ENCODE measurements at regions of chr1 and their contacts with region 1.

Region 1: GRCh38 chr1:212558693-212559480 is 49.7 kb upstream of the ATF3 start:
- DNase-seq: peak; percentile 95 to 96
- ATAC-seq: peak; percentile 95
- H3K4me3 ChIP-seq: peak overlapping the region; percentile 4 to 43
- H3K27ac ChIP-seq: peak overlapping the region in 1 of 2 donors; percentile 100
- H3K4me1 ChIP-seq: no peaks in the 10 kb centered on the region
- H3K27me3 ChIP-seq: no peaks in the 10 kb centered on the region

Region 2: DNA sequence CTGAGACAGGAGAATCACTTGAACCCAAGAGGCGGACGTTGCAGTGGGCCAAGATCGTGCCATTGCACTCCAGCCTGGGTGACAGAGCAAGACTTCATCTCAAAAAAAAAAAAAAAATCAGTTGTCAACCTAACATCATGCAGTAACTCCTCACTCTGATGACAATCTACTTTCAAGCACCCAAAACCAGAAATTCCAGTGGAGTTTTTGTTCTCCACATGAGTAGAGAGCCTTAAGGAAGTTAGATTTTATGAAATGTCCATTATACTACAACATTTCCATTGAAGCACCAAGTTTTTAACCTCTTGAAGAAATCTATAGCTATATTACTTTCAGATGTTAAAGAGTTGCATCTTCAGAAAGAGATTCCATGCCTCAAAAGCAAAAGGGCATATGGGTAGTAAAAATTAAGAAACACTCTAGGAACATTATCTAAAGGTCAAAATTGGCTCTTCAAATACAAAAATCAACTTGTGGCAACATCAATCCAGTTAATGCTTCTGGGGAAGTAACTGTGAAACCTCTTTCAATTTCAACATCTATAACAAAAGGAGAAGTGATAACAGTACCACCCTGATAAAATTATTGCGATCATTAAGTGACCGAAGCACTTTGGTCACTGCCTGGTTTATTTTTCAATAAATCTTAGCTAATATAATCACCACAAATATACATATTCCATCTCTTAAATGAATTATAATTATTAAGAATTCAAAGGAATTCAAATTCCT is 736.0 kb before region 1 on chr1:
- intact Hi-C with region 1: no loop called
- DNase-seq: no peak
- ATAC-seq: no peak
- H3K4me3 ChIP-seq: no peak overlapping the region
- H3K27ac ChIP-seq: no peak overlapping the region
- H3K4me1 ChIP-seq: peaks cover 2% of the 10 kb centered on the region in 2 donors
- H3K27me3 ChIP-seq: no peaks in the 10 kb centered on the region

Region 3: GRCh38 chr1:212482384-212483281 is 76.3 kb before region 1 on chr1:
- intact Hi-C with region 1: loop called (anchors 5 kb)
- DNase-seq: peak in 1 of 2 donors; percentile 73
- ATAC-seq: no peak
- H3K4me3 ChIP-seq: no peak overlapping the region
- H3K27ac ChIP-seq: peak overlapping the region in 1 of 2 donors; percentile 35
- H3K4me1 ChIP-seq: peaks cover 0 to 3% of the 10 kb centered on the region in 2 donors
- H3K27me3 ChIP-seq: no peaks in the 10 kb centered on the region

Region 4: GRCh38 chr1:212488397-212489283 is 70.2 kb before region 1 on chr1:
- intact Hi-C with region 1: loop called (anchors 5 kb)
- DNase-seq: peak in 1 of 2 donors; percentile 78
- ATAC-seq: peak; percentile 77
- H3K4me3 ChIP-seq: no peak overlapping the region
- H3K27ac ChIP-seq: peak overlapping the region in 1 of 2 donors; percentile 70
- H3K4me1 ChIP-seq: no peaks in the 10 kb centered on the region
- H3K27me3 ChIP-seq: no peaks in the 10 kb centered on the region

Region 5: DNA sequence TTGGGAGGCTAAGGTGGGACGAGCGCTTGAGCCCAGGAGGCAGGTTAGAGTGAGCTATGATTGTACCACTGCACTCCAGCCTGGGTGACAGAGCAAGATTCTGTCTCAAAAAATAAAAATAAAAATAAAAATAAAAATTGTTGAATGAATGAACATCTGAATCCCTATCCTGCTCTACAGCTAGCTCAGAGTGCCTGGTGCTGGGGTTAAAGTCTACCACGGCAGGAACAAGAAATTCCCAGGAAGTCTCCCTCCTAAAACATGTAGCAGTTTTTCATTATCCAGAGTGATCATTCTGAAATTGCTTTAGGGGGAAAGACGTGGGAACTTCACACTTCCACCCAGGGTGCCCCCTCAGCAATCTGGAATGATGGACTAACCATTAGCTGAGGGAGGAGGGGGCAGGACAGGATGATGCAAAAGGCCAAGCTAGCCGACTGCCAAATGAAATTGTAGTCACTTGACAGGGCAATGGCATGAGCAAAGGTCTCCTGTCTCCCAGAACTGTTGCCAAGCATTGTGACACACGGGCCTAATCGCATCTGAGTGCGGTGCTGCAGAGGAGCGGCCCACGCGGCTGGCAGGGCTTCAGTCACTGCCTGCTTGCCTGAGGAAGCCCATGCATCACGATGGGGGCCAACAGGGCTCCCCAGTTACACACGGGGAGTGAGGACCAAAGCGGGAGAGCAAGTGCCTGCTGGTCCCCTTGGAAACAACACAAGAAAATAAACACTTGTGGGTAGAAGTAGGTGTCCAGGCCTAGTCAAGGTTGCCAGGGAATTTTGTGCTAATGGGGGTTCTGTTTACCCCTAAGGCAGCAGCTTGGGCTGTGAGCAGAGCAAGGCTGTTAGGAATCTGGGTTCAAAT is 40.5 kb before region 1 on chr1:
- intact Hi-C with region 1: loop called in 1 of 2 experiments (anchors 5 kb)
- DNase-seq: peak in 1 of 2 donors; percentile 84
- ATAC-seq: no peak
- H3K4me3 ChIP-seq: no peak overlapping the region
- H3K27ac ChIP-seq: no peak overlapping the region
- H3K4me1 ChIP-seq: no peaks in the 10 kb centered on the region
- H3K27me3 ChIP-seq: no peaks in the 10 kb centered on the region

Region 6: DNA sequence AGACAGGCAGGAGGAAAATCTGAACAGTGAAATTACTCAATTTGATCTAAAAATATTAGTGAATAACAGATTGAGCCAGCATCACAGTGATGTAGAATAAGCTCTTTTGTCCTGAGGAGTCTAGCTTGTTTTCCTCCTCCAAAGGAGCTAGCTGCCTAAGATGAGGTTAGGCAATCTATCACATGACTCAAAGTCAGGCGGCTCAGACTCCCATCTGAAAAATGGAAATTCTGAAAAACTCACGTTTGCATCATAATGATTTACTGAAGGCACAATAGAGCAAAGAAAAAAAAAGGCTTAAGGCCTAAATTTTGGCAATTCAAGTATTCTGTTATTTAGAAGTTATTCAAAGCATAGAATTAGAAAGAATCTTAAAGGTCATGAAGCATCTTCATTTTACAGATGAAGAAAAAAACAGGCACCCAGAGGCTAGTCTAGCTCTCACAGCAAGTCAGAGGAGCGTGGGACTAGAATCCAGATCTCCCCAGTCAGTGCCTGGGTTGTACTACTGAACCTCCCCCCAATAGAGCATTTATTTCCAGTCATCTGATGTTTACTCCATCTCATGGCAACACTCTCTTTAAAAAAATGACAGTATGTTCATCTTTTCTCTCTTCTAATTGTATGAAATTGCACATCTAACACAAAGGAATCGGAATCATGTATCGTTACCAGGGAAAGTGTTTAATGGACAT is 12.8 kb before region 1 on chr1:
- intact Hi-C with region 1: no loop called
- DNase-seq: no peak
- ATAC-seq: peak; percentile 48
- H3K4me3 ChIP-seq: no peak overlapping the region
- H3K27ac ChIP-seq: no peak overlapping the region
- H3K4me1 ChIP-seq: no peaks in the 10 kb centered on the region
- H3K27me3 ChIP-seq: no peaks in the 10 kb centered on the region

Region 7: DNA sequence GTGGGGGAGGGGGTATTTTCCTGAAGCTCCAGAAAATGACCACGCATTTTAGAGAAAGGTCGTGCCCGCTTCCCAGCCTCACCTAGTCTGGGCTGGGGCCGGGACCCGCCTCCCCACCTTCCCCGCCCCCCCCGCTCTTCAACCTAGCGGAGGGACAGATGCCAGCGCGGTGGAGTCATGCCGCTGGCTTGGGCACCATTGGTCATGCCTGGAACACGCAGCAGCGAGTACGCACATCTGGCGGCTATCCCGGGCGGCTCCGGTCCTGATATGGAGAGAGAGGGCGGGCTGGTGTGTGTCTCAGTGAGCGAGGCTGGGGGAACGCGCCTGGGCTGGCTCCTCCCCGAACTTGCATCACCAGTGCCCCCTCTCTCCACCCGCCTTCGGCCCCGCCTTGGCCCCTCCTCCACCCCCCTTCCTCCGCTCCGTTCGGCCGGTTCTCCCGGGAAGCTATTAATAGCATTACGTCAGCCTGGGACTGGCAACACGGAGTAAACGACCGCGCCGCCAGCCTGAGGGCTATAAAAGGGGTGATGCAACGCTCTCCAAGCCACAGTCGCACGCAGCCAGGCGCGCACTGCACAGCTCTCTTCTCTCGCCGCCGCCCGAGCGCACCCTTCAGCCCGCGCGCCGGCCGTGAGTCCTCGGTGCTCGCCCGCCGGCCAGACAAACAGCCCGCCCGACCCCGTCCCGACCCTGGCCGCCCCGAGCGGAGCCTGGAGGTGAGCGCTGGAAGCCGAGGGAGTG is 49.5 kb after region 1 on chr1 and contains the start of gene ATF3:
- intact Hi-C with region 1: loop called (anchors 2 kb)
- DNase-seq: peak; percentile 100
- ATAC-seq: peak; percentile 96
- H3K4me3 ChIP-seq: peak within 1 kb of the TSS; percentile 87 to 92
- H3K27ac ChIP-seq: peak within 1 kb of the TSS; percentile 81 to 92
- H3K4me1 ChIP-seq: peaks cover 9 to 13% of the 10 kb centered on the region in 2 donors
- H3K27me3 ChIP-seq: peaks cover 0 to 2% of the 10 kb centered on the region in 2 donors
- total RNA-seq, gene ATF3: 28.1 to 265 TPM

Measured in aorta (tissue), 5 donors.